K562 (cell line): ENCODE measurements at regions of chr15 and their contacts with region 1.

Region 1: GRCh38 chr15:71455107-71455506 is 339.8 kb downstream of the THSD4 start:
- DNase-seq: no peak
- ATAC-seq: no peak
- H3K4me3 ChIP-seq: no peak overlapping the region
- H3K27ac ChIP-seq: no peak overlapping the region
- H3K4me1 ChIP-seq: no peaks in the 10 kb centered on the region
- H3K27me3 ChIP-seq: no peaks in the 10 kb centered on the region; a peak in 1 of 5 replicates
- CTCF ChIP-seq: no peak
- EP300 ChIP-seq: no peak
- POLR2A ChIP-seq: no peak
- RAD21 ChIP-seq: no peak

Region 2: DNA sequence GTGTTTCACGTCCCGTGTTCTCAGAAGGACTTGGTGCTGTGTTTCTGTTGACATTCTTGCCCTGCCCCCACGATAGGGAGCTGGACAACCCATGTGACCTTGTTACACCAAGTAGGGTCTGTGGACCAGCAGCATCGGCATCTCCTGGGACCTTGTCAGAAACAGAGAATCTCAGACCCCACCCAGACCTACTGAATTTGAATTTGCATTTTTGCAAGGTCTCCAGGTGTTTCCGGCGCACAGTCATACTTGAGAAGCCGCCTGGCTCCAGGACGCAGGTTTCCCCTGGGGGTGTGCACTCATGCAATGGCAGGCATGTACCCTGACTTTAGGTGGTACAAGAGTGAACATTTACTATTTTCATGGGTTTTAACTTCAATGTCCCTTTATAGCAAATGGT is 1475.3 kb before region 1 on chr15:
- CTCF ChIA-PET with region 1: no interaction called
- POLR2A ChIA-PET with region 1: no interaction called
- in situ Hi-C with region 1: loop called (anchors 10 kb)
- intact Hi-C with region 1: no loop called
- DNase-seq: no peak
- ATAC-seq: no peak
- H3K4me3 ChIP-seq: no peak overlapping the region
- H3K27ac ChIP-seq: no peak overlapping the region
- H3K4me1 ChIP-seq: no peaks in the 10 kb centered on the region
- H3K27me3 ChIP-seq: peaks cover 0 to 9% of the 10 kb centered on the region in 2 experiments; a peak in 3 of 5 replicates
- CTCF ChIP-seq: no peak
- EP300 ChIP-seq: no peak
- POLR2A ChIP-seq: no peak
- RAD21 ChIP-seq: no peak

Region 3: GRCh38 chr15:71575474-71576045 is 120.5 kb after region 1 on chr15:
- CTCF ChIA-PET with region 1: no interaction called
- POLR2A ChIA-PET with region 1: no interaction called
- in situ Hi-C with region 1: no loop called
- intact Hi-C with region 1: no loop called
- DNase-seq: no peak
- ATAC-seq: 0 out of 3 replicates have a peak, but pooled peaks have one; percentile 50
- H3K4me3 ChIP-seq: no peak overlapping the region
- H3K27ac ChIP-seq: no peak overlapping the region
- H3K4me1 ChIP-seq: no peaks in the 10 kb centered on the region
- H3K27me3 ChIP-seq: no peaks in the 10 kb centered on the region; a peak in 1 of 5 replicates
- CTCF ChIP-seq: peak; percentile 14 to 53 (median 28); a peak in 4 of 6 replicates
- EP300 ChIP-seq: no peak
- POLR2A ChIP-seq: no peak
- RAD21 ChIP-seq: peak in 1 of 2 experiments; percentile 46; a peak in 3 of 4 replicates